IMR-90 (cell line): ENCODE measurements at regions of chr12 and their contacts with region 1.

Region 1: GRCh38 chr12:122021822-122022526 is at the start of gene BCL7A:
- DNase-seq: peak; percentile 74
- ATAC-seq: peak; percentile 81
- H3K4me3 ChIP-seq: peak within 1 kb of the TSS; percentile 66
- H3K27ac ChIP-seq: peak within 1 kb of the TSS; percentile 67
- H3K4me1 ChIP-seq: peaks cover 13% of the 10 kb centered on the region
- H3K27me3 ChIP-seq: no peaks in the 10 kb centered on the region
- CTCF ChIP-seq: no peak
- POLR2A ChIP-seq: no peak
- RAD21 ChIP-seq: no peak
- total RNA-seq, gene BCL7A: 5.6 and 6.1 TPM in 2 replicates

Region 2: GRCh38 chr12:121917979-121918678 is 103.8 kb before region 1 on chr12 and contains the start of gene CFAP251:
- CTCF ChIA-PET with region 1: no interaction called
- POLR2A ChIA-PET with region 1: no interaction called
- dilution Hi-C with region 1: no loop called
- in situ Hi-C with region 1: no loop called
- intact Hi-C with region 1: loop called (anchors 1 kb)
- DNase-seq: peak; percentile 58
- ATAC-seq: peak; percentile 44
- H3K4me3 ChIP-seq: no peak within 1 kb of the TSS
- H3K27ac ChIP-seq: peak within 1 kb of the TSS; percentile 18; the same call in 1 of the 2 replicates
- H3K4me1 ChIP-seq: peaks cover 9% of the 10 kb centered on the region
- H3K27me3 ChIP-seq: no peaks in the 10 kb centered on the region
- CTCF ChIP-seq: peak; percentile 55
- POLR2A ChIP-seq: no peak
- RAD21 ChIP-seq: peak; percentile 59
- total RNA-seq, gene CFAP251: 9.1 and 9.4 TPM in 2 replicates

Region 3: DNA sequence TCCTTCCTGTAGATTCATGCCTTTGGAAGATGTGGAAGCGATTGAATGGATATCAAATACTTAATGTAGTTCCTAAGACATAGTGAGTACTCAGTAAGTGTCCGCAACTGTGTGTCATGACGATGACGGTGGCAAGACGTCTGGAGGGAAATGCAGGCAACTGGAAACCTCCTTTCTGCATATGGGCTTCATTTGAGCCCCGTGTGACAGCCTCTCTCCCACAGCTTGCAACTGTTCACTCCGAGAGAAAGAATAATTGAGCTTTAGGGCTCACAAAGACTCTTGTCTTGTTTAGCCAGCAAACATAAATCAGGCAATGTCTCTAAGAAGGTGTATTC is 96.6 kb before region 1 on chr12:
- CTCF ChIA-PET with region 1: no interaction called
- POLR2A ChIA-PET with region 1: no interaction called
- dilution Hi-C with region 1: no loop called
- in situ Hi-C with region 1: no loop called
- intact Hi-C with region 1: loop called (anchors 1 kb)
- DNase-seq: peak; percentile 83
- ATAC-seq: peak; percentile 24
- H3K4me3 ChIP-seq: no peak overlapping the region
- H3K27ac ChIP-seq: peak overlapping the region; percentile 83
- H3K4me1 ChIP-seq: peaks cover 18% of the 10 kb centered on the region
- H3K27me3 ChIP-seq: no peaks in the 10 kb centered on the region
- CTCF ChIP-seq: no peak
- POLR2A ChIP-seq: no peak
- RAD21 ChIP-seq: no peak

Region 4: DNA sequence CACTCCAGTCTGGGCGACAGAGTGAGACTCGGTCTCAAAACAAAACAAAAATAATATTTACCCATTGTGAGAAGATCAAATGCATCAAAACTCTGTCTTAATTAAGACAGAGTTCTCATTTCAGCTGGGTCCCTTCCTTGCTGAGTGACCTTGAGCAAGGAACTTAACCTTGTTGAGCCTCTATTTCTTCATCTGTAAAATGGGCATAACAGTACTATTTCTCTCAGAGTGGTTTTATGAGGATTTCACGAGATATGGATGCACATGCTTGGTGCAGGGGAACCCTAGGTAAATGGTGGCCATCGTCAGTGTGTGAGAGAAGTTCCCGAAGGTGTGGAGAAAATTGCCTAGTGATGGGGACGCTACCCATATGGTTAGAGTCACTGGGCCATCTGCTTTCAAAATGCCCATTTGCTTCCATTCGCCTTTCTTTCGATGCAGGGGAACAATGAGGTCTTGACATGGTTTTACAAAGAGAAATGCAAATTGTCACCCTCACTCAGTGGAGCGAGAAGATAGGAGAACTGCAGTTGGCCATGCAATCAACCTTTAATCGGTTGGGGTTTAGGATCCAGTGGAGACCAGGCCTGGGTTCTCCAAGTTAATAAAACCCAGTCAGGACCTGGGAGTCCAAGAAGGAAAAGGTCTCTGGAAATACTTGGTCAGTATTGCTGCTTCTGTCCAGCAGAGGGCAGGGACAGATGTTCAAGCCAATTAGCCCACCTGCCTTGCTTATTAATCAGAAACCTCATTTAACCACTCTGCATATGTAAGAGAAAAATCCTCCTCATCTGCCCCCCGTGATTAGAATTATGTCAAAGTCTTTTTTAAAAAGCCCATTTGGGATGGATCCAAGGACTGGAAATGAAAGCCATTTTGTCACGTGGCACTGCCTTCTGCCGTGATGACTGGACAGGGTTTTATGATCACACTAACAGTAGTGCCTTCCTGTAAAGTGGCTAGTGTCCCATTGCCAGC is 66.4 kb before region 1 on chr12:
- CTCF ChIA-PET with region 1: no interaction called
- POLR2A ChIA-PET with region 1: no interaction called
- dilution Hi-C with region 1: no loop called
- in situ Hi-C with region 1: no loop called
- intact Hi-C with region 1: loop called (anchors 2 kb)
- DNase-seq: peak; percentile 41
- ATAC-seq: 0 out of 2 replicates have a peak, but pooled peaks have one; percentile 33
- H3K4me3 ChIP-seq: no peak overlapping the region
- H3K27ac ChIP-seq: no peak overlapping the region
- H3K4me1 ChIP-seq: peaks cover 12% of the 10 kb centered on the region
- H3K27me3 ChIP-seq: no peaks in the 10 kb centered on the region
- CTCF ChIP-seq: peak; percentile 55
- POLR2A ChIP-seq: no peak
- RAD21 ChIP-seq: peak; percentile 47